CD4-positive, alpha-beta T cell (primary cell): ENCODE measurements at regions of chr19 and their contacts with region 1.

Region 1: GRCh38 chr19:6862673-6863078 is 24.7 kb upstream of the ADGRE1 start:
- DNase-seq: peak; percentile 84 to 96 (median 88)
- ATAC-seq: peak; percentile 88
- H3K4me3 ChIP-seq: peak overlapping the region; percentile 53
- H3K4me3 Mint-ChIP-seq: peak overlapping the region; percentile 59
- H3K27ac ChIP-seq: no peak overlapping the region
- H3K27ac Mint-ChIP-seq: peak overlapping the region; percentile 71
- H3K4me1 ChIP-seq: peaks cover 18% of the 10 kb centered on the region
- H3K4me1 Mint-ChIP-seq: peaks cover 29% of the 10 kb centered on the region
- H3K27me3 ChIP-seq: no peaks in the 10 kb centered on the region
- H3K27me3 Mint-ChIP-seq: no peaks in the 10 kb centered on the region
- CTCF ChIP-seq: peak; percentile 80

Region 2: DNA sequence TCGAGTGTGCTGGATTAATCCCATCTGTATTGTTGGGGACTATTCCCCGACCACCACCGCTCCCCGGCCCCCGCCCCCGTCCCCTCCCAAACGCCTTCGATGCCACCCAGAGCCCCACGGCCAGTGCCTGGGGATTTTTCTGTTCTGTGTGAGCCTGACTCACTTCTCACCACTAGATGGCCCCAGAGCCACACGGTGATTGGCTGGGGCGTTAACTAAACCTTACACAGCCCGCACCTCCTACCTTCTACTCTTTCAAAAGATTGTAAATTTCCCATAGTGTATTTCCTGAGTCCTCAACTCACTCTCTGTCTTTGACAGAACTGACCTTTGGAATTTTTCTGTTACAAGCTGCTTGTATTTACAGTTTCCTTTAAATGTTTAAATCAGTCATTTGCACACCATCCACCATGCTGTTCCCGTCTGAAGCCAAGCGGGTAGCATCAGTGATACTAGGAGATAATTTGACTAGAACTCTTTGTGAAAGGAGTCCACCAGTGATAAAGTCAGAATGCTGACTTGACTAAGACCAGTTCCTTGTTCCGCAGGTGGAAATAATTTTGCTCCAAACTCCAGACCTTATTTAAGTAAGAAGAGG is 813.8 kb before region 1 on chr19:
- CTCF ChIA-PET with region 1: interaction called, 3 read pairs
- POLR2A ChIA-PET with region 1: no interaction called
- intact Hi-C with region 1: loop called in 1 of 2 experiments (anchors 5 kb)
- DNase-seq: peak; percentile 65 to 90 (median 74)
- ATAC-seq: peak; percentile 99
- H3K4me3 ChIP-seq: no peak overlapping the region
- H3K4me3 Mint-ChIP-seq: no peak overlapping the region
- H3K27ac ChIP-seq: no peak overlapping the region
- H3K27ac Mint-ChIP-seq: no peak overlapping the region
- H3K4me1 ChIP-seq: peaks cover 3% of the 10 kb centered on the region
- H3K4me1 Mint-ChIP-seq: peaks cover 6% of the 10 kb centered on the region
- H3K27me3 ChIP-seq: no peaks in the 10 kb centered on the region
- H3K27me3 Mint-ChIP-seq: peaks cover 7% of the 10 kb centered on the region
- CTCF ChIP-seq: peak; percentile 91

Region 3: DNA sequence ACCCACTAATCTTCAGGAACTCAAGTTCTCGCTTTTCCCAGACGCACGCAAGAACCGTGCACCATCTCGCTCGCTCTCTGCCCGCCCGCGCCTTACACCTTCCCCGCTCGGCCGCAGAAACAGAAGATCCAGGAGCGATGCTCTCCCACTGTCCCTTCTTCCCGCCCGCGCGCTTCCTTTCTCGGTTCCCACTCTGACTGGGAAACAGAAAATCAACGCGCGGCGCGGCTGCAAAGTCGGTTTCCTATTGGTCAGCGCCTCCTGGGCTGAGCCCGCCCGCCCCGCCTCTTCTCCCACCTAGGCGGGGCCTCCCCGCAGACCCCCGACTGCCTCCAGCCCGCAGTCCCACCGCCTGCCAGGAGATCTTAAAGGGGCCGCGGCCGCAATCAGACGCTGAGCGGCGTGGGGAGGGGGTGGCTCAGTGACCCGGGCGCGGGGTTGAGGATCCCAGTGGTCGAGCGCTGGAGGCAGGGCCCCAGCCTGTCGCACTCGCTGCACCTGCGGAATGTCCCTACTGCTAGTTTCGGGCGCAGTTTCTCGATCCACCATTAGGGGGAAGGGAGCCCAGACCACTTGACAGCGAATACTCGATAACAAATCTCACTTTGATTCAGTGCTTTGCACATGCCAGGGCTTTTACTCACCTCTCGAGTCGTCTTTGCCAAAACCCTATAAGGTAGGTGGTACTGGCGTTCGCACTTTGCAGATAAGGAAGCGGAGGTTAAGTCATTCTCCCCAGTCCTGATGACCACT is 402.4 kb before region 1 on chr19:
- CTCF ChIA-PET with region 1: no interaction called
- POLR2A ChIA-PET with region 1: no interaction called
- intact Hi-C with region 1: loop called in 1 of 2 experiments (anchors 5 kb)
- DNase-seq: peak; percentile 95 to 97 (median 96)
- ATAC-seq: peak; percentile 80
- H3K4me3 ChIP-seq: peak overlapping the region; percentile 68
- H3K4me3 Mint-ChIP-seq: peak overlapping the region; percentile 91
- H3K27ac ChIP-seq: peak overlapping the region; percentile 44 to 89
- H3K27ac Mint-ChIP-seq: peak overlapping the region; percentile 86
- H3K4me1 ChIP-seq: peaks cover 36% of the 10 kb centered on the region
- H3K4me1 Mint-ChIP-seq: peaks cover 31% of the 10 kb centered on the region
- H3K27me3 ChIP-seq: no peaks in the 10 kb centered on the region
- H3K27me3 Mint-ChIP-seq: no peaks in the 10 kb centered on the region
- CTCF ChIP-seq: peak; percentile 75

Region 4: GRCh38 chr19:6632002-6632621 is 230.6 kb before region 1 on chr19:
- CTCF ChIA-PET with region 1: interaction called, 10 read pairs
- POLR2A ChIA-PET with region 1: interaction called, 6 read pairs
- intact Hi-C with region 1: loop called (anchors 1 kb)
- DNase-seq: peak; percentile 39 to 91 (median 74)
- ATAC-seq: peak; percentile 77
- H3K4me3 ChIP-seq: no peak overlapping the region
- H3K4me3 Mint-ChIP-seq: no peak overlapping the region
- H3K27ac ChIP-seq: no peak overlapping the region
- H3K27ac Mint-ChIP-seq: no peak overlapping the region
- H3K4me1 ChIP-seq: peaks cover 6% of the 10 kb centered on the region
- H3K4me1 Mint-ChIP-seq: peaks cover 4% of the 10 kb centered on the region
- H3K27me3 ChIP-seq: no peaks in the 10 kb centered on the region
- H3K27me3 Mint-ChIP-seq: peaks cover 4% of the 10 kb centered on the region
- CTCF ChIP-seq: peak; percentile 94

Region 5: DNA sequence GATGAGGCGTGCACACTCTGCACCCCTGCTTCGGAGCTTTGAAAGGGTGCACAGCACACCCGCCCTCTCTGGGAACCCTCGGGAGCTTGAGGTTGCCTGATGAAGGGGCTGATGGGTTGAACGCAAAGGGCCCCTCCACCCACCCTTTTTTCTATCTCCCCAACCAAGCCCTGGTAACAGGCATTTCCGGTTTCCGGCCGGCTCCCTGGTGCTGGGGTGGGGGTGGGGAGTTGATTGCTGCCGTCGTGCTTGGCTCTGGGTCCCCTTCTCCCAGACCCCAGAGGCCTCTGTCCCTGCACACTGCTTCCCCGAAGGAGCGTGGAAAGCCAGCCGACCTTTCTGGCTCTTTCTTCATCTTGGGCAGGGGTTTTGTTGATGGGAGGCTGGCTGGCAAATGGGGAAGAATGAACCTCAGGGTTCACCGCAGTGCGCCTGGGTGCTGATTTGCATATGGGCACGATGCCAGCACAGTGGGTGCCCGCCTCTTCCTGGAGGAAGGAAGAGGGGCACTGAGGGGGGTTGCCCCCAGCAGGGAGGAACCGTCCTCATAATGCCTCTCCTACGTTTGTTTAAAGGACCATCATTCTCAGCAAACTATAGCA is 61.1 kb before region 1 on chr19:
- CTCF ChIA-PET with region 1: interaction called, 3 read pairs
- POLR2A ChIA-PET with region 1: interaction called, 3 read pairs
- intact Hi-C with region 1: loop called in 1 of 2 experiments (anchors 5 kb)
- DNase-seq: peak; percentile 55 to 92 (median 78)
- ATAC-seq: peak; percentile 84
- H3K4me3 ChIP-seq: peak overlapping the region; percentile 49
- H3K4me3 Mint-ChIP-seq: peak overlapping the region; percentile 91
- H3K27ac ChIP-seq: peak overlapping the region; percentile 43 to 92
- H3K27ac Mint-ChIP-seq: peak overlapping the region; percentile 93
- H3K4me1 ChIP-seq: peaks cover 76% of the 10 kb centered on the region
- H3K4me1 Mint-ChIP-seq: peaks cover 69% of the 10 kb centered on the region
- H3K27me3 ChIP-seq: no peaks in the 10 kb centered on the region
- H3K27me3 Mint-ChIP-seq: no peaks in the 10 kb centered on the region
- CTCF ChIP-seq: no peak

Region 6: DNA sequence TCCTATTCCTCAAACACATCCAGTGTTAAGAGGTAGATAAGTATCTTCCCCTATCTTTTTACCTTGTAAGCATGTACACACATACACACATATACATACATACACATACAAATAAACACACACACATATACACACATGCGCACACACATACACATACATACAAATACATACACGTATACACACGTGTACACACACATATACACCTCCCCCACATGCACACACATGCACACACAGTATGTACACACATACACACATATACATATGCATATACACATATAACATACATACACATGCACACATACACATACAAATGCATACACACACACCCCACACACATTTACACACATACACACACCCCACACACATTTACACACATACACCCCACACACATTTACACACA is 48.8 kb after region 1 on chr19:
- CTCF ChIA-PET with region 1: no interaction called
- POLR2A ChIA-PET with region 1: no interaction called
- intact Hi-C with region 1: no loop called
- DNase-seq: no peak
- ATAC-seq: no peak
- H3K4me3 ChIP-seq: no peak overlapping the region
- H3K4me3 Mint-ChIP-seq: no peak overlapping the region
- H3K27ac ChIP-seq: no peak overlapping the region
- H3K27ac Mint-ChIP-seq: no peak overlapping the region
- H3K4me1 ChIP-seq: no peaks in the 10 kb centered on the region
- H3K4me1 Mint-ChIP-seq: no peaks in the 10 kb centered on the region
- H3K27me3 ChIP-seq: no peaks in the 10 kb centered on the region
- H3K27me3 Mint-ChIP-seq: no peaks in the 10 kb centered on the region
- CTCF ChIP-seq: no peak

Region 7: DNA sequence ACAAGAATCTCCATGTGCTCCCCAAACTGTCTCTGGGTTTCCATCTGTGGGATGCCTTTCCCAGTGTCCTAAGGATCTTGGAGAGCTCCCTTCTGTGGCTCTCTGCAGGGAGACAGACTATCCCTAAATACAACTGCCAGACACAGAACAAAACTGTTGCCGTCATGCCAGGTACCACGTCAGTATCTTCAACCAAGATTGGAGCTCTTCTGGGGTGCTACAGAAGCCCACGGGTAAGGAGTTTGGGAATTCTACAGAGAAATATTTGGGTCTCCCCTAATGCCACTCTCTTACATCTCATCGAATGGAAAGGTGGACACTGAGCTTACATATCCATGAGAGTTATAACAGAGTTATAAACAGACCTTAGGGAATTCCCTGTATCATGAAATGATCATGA is 200.7 kb after region 1 on chr19:
- CTCF ChIA-PET with region 1: no interaction called
- POLR2A ChIA-PET with region 1: no interaction called
- intact Hi-C with region 1: no loop called
- DNase-seq: peak in 1 of 14 experiments; percentile 2
- ATAC-seq: no peak
- H3K4me3 ChIP-seq: no peak overlapping the region
- H3K4me3 Mint-ChIP-seq: no peak overlapping the region
- H3K27ac ChIP-seq: no peak overlapping the region
- H3K27ac Mint-ChIP-seq: no peak overlapping the region
- H3K4me1 ChIP-seq: peaks cover 3% of the 10 kb centered on the region
- H3K4me1 Mint-ChIP-seq: no peaks in the 10 kb centered on the region
- H3K27me3 ChIP-seq: no peaks in the 10 kb centered on the region
- H3K27me3 Mint-ChIP-seq: no peaks in the 10 kb centered on the region
- CTCF ChIP-seq: no peak

Region 8: DNA sequence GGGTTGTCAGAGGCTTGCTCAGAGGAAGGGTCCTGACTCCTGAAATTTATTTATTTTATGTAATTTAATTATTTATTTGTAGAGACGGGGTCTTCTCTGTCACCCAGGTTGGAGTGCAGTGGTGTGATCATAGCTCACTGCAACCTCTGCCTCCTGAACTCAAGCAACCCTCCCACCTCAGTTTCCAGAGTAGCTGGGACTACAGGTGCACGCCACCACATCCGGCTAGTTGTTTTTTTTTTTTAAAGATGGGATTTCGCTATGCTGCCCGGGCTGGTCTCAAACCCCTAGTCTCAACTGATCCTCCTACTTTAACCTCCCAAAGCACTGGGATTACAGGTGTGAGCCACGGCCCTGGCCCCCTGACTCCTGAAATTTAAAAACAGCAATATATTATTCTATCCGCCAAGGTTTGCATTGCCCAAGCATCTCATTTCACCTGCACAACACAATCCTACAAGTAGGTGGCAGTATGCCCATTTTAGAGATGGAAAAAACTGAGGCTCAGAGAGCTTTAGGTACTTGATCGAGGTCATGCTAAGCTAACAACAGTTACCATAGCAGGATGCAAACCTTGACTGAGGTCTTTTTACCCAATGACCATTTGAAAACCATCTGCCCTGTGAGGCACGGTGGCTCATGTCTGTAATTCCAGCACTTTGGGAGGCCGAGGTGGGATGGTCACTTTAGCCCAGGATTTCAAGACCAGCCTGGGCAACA is 504.2 kb after region 1 on chr19:
- CTCF ChIA-PET with region 1: no interaction called
- POLR2A ChIA-PET with region 1: no interaction called
- intact Hi-C with region 1: no loop called
- DNase-seq: peak in 3 of 14 experiments; percentile 54 to 60 (median 56)
- ATAC-seq: peak; percentile 67
- H3K4me3 ChIP-seq: no peak overlapping the region
- H3K4me3 Mint-ChIP-seq: no peak overlapping the region
- H3K27ac ChIP-seq: no peak overlapping the region
- H3K27ac Mint-ChIP-seq: peak overlapping the region; percentile 83
- H3K4me1 ChIP-seq: peaks cover 39% of the 10 kb centered on the region
- H3K4me1 Mint-ChIP-seq: peaks cover 47% of the 10 kb centered on the region
- H3K27me3 ChIP-seq: no peaks in the 10 kb centered on the region
- H3K27me3 Mint-ChIP-seq: no peaks in the 10 kb centered on the region
- CTCF ChIP-seq: peak; percentile 55